ENCODE measurements at regions of chr15 and their contacts with region 1.

Region 1: DNA sequence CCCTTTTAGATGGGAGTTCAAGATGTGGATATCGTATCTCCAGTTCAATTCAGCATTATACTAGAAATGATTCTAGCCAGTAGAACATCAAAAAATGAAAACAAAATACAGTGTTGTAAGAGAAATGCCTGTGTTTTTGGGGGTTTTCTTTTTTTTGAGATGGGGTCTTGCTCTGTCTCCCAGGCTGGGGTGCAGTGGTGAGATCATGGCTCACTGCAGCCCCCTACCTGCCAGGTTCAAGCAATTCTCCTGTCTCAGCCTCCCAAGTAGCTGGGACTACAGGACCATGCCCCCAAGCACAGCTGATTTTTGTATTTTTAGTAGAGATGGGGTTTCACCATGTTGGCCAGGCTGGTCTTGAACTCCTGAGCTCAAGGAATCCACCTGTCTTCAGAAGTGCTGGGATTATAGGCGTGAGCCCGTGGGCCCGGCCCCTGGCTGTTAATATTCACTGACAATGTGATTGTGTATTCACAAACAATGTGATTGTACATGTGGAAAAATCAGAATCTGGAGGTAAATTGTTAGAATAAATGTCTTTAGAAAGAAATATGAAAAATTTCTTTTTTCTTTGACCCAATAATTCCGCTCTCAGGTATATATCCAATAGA is 59.0 kb downstream of the ARIH1 start:
- DNase-seq: no peak
- H3K4me3 ChIP-seq: no peak overlapping the region
- H3K27ac ChIP-seq: no peak overlapping the region
- H3K4me1 ChIP-seq: peaks cover 0 to 9% (median 2%) of the 10 kb centered on the region in 4 donors
- H3K27me3 ChIP-seq: no peaks in the 10 kb centered on the region
- CTCF ChIP-seq: peak; percentile 24 to 34 (median 29)
- EP300 ChIP-seq: no peak
- POLR2A ChIP-seq: no peak

Region 2: GRCh38 chr15:72487070-72487797 is 45.9 kb before region 1 on chr15:
- intact Hi-C with region 1: loop called (anchors 10 kb)
- DNase-seq: no peak
- H3K4me3 ChIP-seq: no peak overlapping the region
- H3K27ac ChIP-seq: no peak overlapping the region
- H3K4me1 ChIP-seq: peaks cover 41 to 97% (median 87%) of the 10 kb centered on the region in 4 donors
- H3K27me3 ChIP-seq: no peaks in the 10 kb centered on the region
- CTCF ChIP-seq: no peak
- EP300 ChIP-seq: no peak
- POLR2A ChIP-seq: no peak